ENCODE measurements at regions of chr7 and their contacts with region 1.

Region 1: DNA sequence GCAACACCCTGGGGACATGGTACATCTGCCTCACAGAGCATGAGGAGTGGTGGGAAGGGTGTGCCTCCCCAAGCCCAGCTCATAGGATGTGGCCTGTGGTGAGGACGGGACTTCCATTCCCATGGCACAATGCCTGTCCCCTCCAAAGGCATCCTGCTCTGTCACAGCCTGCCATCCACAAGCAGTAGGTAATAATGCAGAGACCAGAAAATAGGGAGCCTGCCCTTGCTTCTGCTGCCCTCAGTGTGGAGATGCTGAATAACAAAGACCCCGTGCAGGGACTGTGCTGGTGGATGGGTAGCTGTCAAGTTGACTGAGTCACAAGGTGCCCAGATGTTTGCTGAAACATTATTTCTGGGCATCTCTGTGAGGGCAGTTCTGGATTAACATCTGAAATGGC is 199.9 kb upstream of the GRB10 start:
- DNase-seq: no peak
- H3K4me3 ChIP-seq: peak overlapping the region in 1 of 4 experiments; percentile 10; a peak in 1 of 8 replicates
- H3K27ac ChIP-seq: no peak overlapping the region
- H3K4me1 ChIP-seq: peaks cover 0 to 9% (median 8%) of the 10 kb centered on the region in 4 experiments
- H3K27me3 ChIP-seq: no peaks in the 10 kb centered on the region; a peak in 1 of 7 replicates
- CTCF ChIP-seq: peak; percentile 50 to 61 (median 58)
- EP300 ChIP-seq: no peak
- POLR2A ChIP-seq: no peak
- RAD21 ChIP-seq: peak; percentile 69 to 70

Region 2: GRCh38 chr7:50994753-50995319 is 12.2 kb after region 1 on chr7:
- CTCF ChIA-PET with region 1: interaction called, 10 read pairs
- POLR2A ChIA-PET with region 1: interaction called, 3 read pairs
- DNase-seq: no peak
- H3K4me3 ChIP-seq: no peak overlapping the region
- H3K27ac ChIP-seq: no peak overlapping the region
- H3K4me1 ChIP-seq: no peaks in the 10 kb centered on the region
- H3K27me3 ChIP-seq: no peaks in the 10 kb centered on the region
- CTCF ChIP-seq: no peak
- EP300 ChIP-seq: no peak
- POLR2A ChIP-seq: no peak
- RAD21 ChIP-seq: no peak

Region 3: GRCh38 chr7:51009704-51010496 is 27.3 kb after region 1 on chr7:
- CTCF ChIA-PET with region 1: interaction called, 12 read pairs
- POLR2A ChIA-PET with region 1: no interaction called
- DNase-seq: peak in 1 of 2 experiments; percentile 37
- H3K4me3 ChIP-seq: no peak overlapping the region
- H3K27ac ChIP-seq: no peak overlapping the region
- H3K4me1 ChIP-seq: no peaks in the 10 kb centered on the region
- H3K27me3 ChIP-seq: no peaks in the 10 kb centered on the region
- CTCF ChIP-seq: no peak
- EP300 ChIP-seq: no peak
- POLR2A ChIP-seq: no peak
- RAD21 ChIP-seq: no peak

Region 4: DNA sequence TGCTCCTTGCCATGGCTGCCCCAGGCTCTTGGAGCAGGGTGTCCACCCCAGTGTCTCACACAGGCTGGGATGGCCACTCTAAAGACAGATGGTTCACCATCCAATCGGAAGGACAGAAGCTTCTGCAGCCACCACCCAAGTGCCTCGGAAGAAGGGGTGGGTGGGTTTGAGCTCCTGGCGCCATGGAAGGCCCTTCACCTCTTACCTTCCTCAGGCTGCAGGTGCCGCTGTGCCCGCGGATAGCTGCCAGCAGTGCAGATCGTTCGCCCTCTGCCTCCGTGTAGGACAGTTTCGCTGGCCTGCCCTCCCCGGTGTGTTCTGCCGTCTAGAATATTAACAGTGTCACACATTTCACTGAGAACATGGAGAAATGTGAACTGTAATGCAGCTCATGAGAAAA is 43.7 kb after region 1 on chr7:
- CTCF ChIA-PET with region 1: no interaction called
- POLR2A ChIA-PET with region 1: no interaction called
- DNase-seq: peak in 1 of 2 experiments; percentile 22
- H3K4me3 ChIP-seq: no peak overlapping the region
- H3K27ac ChIP-seq: no peak overlapping the region
- H3K4me1 ChIP-seq: no peaks in the 10 kb centered on the region; a peak in 1 of 7 replicates
- H3K27me3 ChIP-seq: no peaks in the 10 kb centered on the region
- CTCF ChIP-seq: no peak
- EP300 ChIP-seq: no peak
- POLR2A ChIP-seq: no peak
- RAD21 ChIP-seq: no peak

Measured in H1 (cell line).